CD14-positive monocyte (primary cell): ENCODE measurements at regions of chr17 and their contacts with region 1.

Region 1: GRCh38 chr17:42773290-42774035 is at the start of gene VPS25:
- DNase-seq: peak; percentile 72 to 78 (median 78)
- H3K4me3 ChIP-seq: peak within 1 kb of the TSS; percentile 89 to 94 (median 94)
- H3K4me3 Mint-ChIP-seq: peak within 1 kb of the TSS; percentile 100
- H3K27ac ChIP-seq: peak within 1 kb of the TSS; percentile 69 to 90
- H3K27ac Mint-ChIP-seq: peak within 1 kb of the TSS; percentile 94 to 98 (median 96)
- H3K4me1 ChIP-seq: peaks cover 11 to 13% of the 10 kb centered on the region in 2 donors
- H3K4me1 Mint-ChIP-seq: peaks cover 17% of the 10 kb centered on the region
- H3K27me3 ChIP-seq: no peaks in the 10 kb centered on the region
- H3K27me3 Mint-ChIP-seq: peaks cover 4 to 10% (median 6%) of the 10 kb centered on the region in 3 donors
- CTCF ChIP-seq: no peak
- polyA plus RNA-seq, gene VPS25: 71.3 to 125 (median 104) TPM

Region 2: GRCh38 chr17:42698736-42699414 is 74.6 kb before region 1 on chr17:
- intact Hi-C with region 1: no loop called
- DNase-seq: no peak
- H3K4me3 ChIP-seq: no peak overlapping the region
- H3K4me3 Mint-ChIP-seq: no peak overlapping the region
- H3K27ac ChIP-seq: no peak overlapping the region
- H3K27ac Mint-ChIP-seq: no peak overlapping the region
- H3K4me1 ChIP-seq: no peaks in the 10 kb centered on the region
- H3K4me1 Mint-ChIP-seq: no peaks in the 10 kb centered on the region
- H3K27me3 ChIP-seq: no peaks in the 10 kb centered on the region
- H3K27me3 Mint-ChIP-seq: peaks cover 0 to 2% (median 0%) of the 10 kb centered on the region in 3 donors
- CTCF ChIP-seq: no peak

Region 3: DNA sequence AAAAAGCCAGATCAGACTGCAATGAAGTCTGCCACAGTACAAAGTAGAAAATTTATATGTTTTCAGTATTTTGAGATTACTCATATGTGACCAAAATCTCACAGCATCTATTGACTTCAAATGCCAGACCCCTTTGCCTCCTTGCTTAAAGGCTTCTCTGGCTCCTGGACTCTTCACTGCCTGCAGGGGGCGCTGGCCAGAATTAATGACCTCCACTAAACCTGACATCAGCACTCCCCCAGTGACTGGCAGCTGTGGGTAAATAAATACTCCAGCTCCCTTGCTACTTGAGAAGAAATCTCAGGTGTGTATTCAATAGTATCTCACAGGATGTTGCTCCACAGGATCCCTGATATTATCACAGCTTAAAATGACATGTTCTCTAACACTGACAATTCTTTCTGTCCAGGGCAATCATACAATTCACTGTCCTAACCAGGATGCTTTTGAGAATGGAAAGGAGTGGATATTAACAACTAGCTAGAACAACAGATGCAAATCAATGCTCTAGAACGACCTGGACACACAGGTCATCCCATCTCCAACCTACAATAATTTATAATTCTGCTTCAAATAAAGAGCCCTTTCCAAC is 46.6 kb after region 1 on chr17:
- intact Hi-C with region 1: loop called in 1 of 2 experiments (anchors 5 kb)
- DNase-seq: peak; percentile 49 to 67 (median 54)
- H3K4me3 ChIP-seq: no peak overlapping the region
- H3K4me3 Mint-ChIP-seq: no peak overlapping the region
- H3K27ac ChIP-seq: no peak overlapping the region
- H3K27ac Mint-ChIP-seq: peak overlapping the region in 2 of 7 donors; percentile 21 to 55
- H3K4me1 ChIP-seq: peaks cover 10 to 19% of the 10 kb centered on the region in 2 donors
- H3K4me1 Mint-ChIP-seq: peaks cover 10% of the 10 kb centered on the region
- H3K27me3 ChIP-seq: no peaks in the 10 kb centered on the region
- H3K27me3 Mint-ChIP-seq: peaks cover 0 to 2% (median 0%) of the 10 kb centered on the region in 3 donors
- CTCF ChIP-seq: peak; percentile 91